PC-9 (cell line): ENCODE measurements at regions of chr12 and their contacts with region 1.

Region 1: GRCh38 chr12:20527417-20528163 is 159.3 kb downstream of the PDE3A start:
- DNase-seq: no peak
- H3K4me3 ChIP-seq: no peak overlapping the region
- H3K27ac ChIP-seq: no peak overlapping the region
- H3K4me1 ChIP-seq: no peaks in the 10 kb centered on the region
- H3K27me3 ChIP-seq: no peaks in the 10 kb centered on the region
- CTCF ChIP-seq: no peak

Region 2: DNA sequence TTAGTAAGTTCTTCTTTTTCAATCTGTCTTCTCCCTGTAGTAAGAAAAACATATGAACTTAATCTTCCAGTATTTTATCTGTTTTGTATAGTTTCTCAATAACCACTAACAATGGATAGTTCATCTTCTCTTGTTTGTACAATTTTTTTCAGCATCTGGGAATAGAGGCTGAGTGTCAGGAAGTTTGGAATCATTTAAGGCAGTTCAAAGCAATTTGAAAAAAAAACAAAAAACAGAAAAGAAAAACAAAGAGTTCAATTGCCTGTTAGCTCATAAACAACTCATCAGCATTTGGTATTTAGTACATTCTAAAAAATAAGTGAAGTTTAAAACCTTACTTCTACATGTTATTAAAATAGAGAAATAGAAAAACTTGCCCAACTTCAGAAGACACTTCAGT is 1906.6 kb before region 1 on chr12:
- CTCF ChIA-PET with region 1: interaction called, 10 read pairs
- POLR2A ChIA-PET with region 1: no interaction called
- intact Hi-C with region 1: no loop called
- DNase-seq: no peak
- H3K4me3 ChIP-seq: no peak overlapping the region
- H3K27ac ChIP-seq: no peak overlapping the region
- H3K4me1 ChIP-seq: no peaks in the 10 kb centered on the region
- H3K27me3 ChIP-seq: no peaks in the 10 kb centered on the region
- CTCF ChIP-seq: no peak

Region 3: GRCh38 chr12:20050221-20050620 is 477.4 kb before region 1 on chr12:
- CTCF ChIA-PET with region 1: no interaction called
- POLR2A ChIA-PET with region 1: no interaction called
- intact Hi-C with region 1: no loop called
- DNase-seq: no peak
- H3K4me3 ChIP-seq: no peak overlapping the region
- H3K27ac ChIP-seq: no peak overlapping the region
- H3K4me1 ChIP-seq: no peaks in the 10 kb centered on the region
- H3K27me3 ChIP-seq: no peaks in the 10 kb centered on the region
- CTCF ChIP-seq: no peak